Left ventricle myocardium superior (tissue), 1 donor: ENCODE measurements at regions of chr1 and their contacts with region 1.

Region 1: GRCh38 chr1:113929750-113930498 is 800 bp downstream of the HIPK1 start:
- DNase-seq: peak; percentile 61
- ATAC-seq: peak; percentile 52

Region 2: GRCh38 chr1:113835642-113836307 is 94.1 kb before region 1 on chr1:
- intact Hi-C with region 1: loop called (anchors 10 kb)
- DNase-seq: no peak
- ATAC-seq: no peak

Region 3: DNA sequence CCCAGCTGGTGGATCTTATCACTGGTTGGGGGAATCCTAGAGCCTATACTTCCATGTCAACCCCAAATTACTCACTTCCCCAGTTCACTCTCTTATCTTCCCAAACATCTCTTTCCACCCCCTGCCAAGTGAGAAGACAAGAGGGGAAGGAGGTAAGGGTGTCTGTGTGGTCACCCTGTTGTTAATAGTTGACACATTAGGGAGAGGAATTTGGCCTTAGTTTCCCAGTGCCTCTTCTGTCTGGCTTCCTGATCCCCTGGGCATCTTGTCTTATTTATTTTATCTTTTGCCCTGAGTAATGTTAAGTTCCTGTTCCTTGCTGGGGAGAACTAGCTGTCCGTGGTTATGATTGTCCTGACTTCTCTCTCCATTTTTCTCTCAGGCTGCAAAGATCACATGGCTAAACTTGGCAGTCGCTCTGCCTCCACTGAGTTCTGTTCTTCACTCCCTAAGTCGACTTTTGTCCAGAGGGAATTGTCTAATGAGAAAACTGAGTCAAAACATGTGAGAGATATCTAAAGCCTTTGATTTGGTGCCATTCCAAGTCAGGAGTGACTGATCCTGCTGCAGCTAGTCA is 380.9 kb after region 1 on chr1:
- intact Hi-C with region 1: no loop called
- DNase-seq: no peak
- ATAC-seq: peak; percentile 74